ENCODE measurements at regions of chr1 and their contacts with region 1.

Region 1: DNA sequence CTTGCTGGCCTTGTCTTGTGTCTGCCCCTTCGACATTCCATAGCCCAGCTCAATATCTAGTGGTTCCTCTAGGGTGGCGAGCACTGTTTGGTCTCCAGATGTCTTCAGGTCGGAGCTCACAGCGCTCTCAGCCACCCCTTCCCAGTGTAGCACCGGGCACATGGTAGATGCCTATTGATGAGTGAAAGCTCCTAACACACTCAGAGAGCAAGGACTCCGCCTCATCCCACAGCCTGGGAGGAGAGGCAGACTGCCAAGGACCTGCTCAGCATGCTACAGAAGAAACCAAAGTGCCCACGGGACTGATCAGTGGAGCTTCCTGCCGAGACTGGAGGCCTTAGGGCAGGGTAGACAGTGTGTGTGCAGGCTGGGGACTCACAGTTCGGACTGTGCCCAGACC is 10.9 kb downstream of the PCSK9 start:
- DNase-seq: no peak
- H3K4me3 ChIP-seq: no peak overlapping the region
- H3K27ac ChIP-seq: no peak overlapping the region
- H3K4me1 ChIP-seq: no peaks in the 10 kb centered on the region
- H3K27me3 ChIP-seq: no peaks in the 10 kb centered on the region
- CTCF ChIP-seq: no peak
- EP300 ChIP-seq: no peak
- POLR2A ChIP-seq: no peak
- RAD21 ChIP-seq: no peak

Region 2: DNA sequence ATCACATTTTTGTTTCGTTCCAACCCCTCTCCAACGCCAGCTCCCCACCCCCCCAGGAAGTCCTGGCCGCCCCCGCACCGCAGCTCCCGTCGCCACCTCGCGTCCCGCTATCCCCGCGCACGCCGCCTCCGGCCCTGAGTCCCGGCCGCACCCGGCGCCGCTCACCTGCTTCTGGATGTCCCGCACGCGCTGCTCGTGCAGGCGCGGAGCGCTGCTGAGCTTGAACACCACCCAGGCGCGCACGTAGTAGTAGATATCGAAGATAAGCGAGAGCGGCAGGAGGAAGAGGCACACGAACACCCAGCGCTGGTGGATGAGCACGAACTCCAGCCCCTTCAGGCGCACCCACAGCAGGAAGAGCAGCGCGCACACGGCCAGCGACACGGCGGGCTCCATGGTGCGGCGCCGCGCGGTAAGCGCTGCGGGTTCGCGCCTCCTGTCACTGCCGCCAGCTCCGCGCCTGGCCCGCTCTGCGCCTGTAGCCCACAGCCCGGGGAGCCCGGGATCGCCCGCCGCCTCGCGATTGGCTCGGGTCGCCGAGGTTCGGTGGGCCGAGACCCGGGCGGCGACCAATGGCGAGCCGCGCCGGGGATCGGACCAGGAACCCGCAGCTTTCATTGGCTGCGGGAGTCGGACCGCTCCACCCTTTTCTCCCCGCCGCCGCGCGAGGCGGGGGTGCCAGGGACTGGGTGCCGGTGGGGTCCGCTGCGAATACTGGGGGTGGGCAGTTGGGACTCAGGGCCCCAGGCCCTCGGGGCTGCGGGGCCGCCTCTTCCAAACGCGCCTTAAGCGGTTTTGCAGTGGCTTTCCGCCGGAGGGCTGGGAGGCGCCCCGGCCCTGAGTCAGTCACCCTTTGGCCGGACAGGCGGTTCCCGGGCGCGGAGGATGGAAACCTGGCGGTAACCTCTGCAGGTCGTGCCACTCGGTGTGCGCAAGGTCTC is 163.3 kb before region 1 on chr1 and contains the start of gene DHCR24:
- CTCF ChIA-PET with region 1: no interaction called
- POLR2A ChIA-PET with region 1: no interaction called
- DNase-seq: peak; percentile 49 to 90
- H3K4me3 ChIP-seq: peak within 1 kb of the TSS; percentile 77 to 99 (median 84)
- H3K27ac ChIP-seq: peak within 1 kb of the TSS; percentile 47; the same call in 1 of the 2 replicates
- H3K4me1 ChIP-seq: peaks cover 13 to 22% (median 19%) of the 10 kb centered on the region in 4 experiments
- H3K27me3 ChIP-seq: no peaks in the 10 kb centered on the region
- CTCF ChIP-seq: no peak
- EP300 ChIP-seq: no peak
- POLR2A ChIP-seq: peak in 1 of 2 experiments; percentile 65; a peak in 1 of 3 replicates
- RAD21 ChIP-seq: no peak
- total RNA-seq, gene DHCR24: 419 and 455 TPM in 2 replicates

Region 3: GRCh38 chr1:55064071-55064581 is 13.8 kb after region 1 on chr1:
- CTCF ChIA-PET with region 1: interaction called, 12 read pairs
- POLR2A ChIA-PET with region 1: interaction called, 4 read pairs
- DNase-seq: no peak
- H3K4me3 ChIP-seq: no peak overlapping the region
- H3K27ac ChIP-seq: no peak overlapping the region
- H3K4me1 ChIP-seq: no peaks in the 10 kb centered on the region
- H3K27me3 ChIP-seq: no peaks in the 10 kb centered on the region
- CTCF ChIP-seq: peak in 1 of 3 experiments; percentile 52; a peak in 2 of 4 replicates
- EP300 ChIP-seq: no peak
- POLR2A ChIP-seq: no peak
- RAD21 ChIP-seq: no peak

Region 4: DNA sequence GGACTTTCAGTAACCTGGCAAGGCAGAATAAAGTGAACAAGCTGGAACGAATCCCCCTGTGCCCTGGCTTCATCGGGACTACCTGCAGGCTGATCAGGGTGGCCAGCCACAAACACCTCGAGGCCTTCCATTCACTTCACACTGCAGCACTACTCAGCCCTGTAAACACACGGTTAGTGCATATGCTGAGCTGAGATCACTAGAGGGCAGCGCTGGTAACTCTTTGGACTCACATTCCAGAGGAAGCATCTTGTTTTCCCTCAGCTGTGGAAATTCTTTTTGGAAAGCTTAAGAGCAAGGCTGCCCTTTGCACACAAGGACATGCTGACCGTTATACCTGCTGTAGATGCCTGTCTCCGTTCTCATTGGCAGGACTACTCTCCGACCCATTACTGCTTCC is 21.2 kb after region 1 on chr1:
- CTCF ChIA-PET with region 1: interaction called, 11 read pairs
- POLR2A ChIA-PET with region 1: no interaction called
- DNase-seq: peak in 1 of 2 experiments; percentile 36
- H3K4me3 ChIP-seq: no peak overlapping the region
- H3K27ac ChIP-seq: no peak overlapping the region
- H3K4me1 ChIP-seq: no peaks in the 10 kb centered on the region
- H3K27me3 ChIP-seq: no peaks in the 10 kb centered on the region
- CTCF ChIP-seq: peak; percentile 31 to 83 (median 61)
- EP300 ChIP-seq: no peak
- POLR2A ChIP-seq: no peak
- RAD21 ChIP-seq: peak; percentile 48 to 66

Region 5: GRCh38 chr1:55155514-55155913 is 105.2 kb after region 1 on chr1:
- CTCF ChIA-PET with region 1: no interaction called
- POLR2A ChIA-PET with region 1: no interaction called
- DNase-seq: no peak
- H3K4me3 ChIP-seq: no peak overlapping the region
- H3K27ac ChIP-seq: no peak overlapping the region
- H3K4me1 ChIP-seq: no peaks in the 10 kb centered on the region
- H3K27me3 ChIP-seq: no peaks in the 10 kb centered on the region
- CTCF ChIP-seq: no peak
- EP300 ChIP-seq: no peak
- POLR2A ChIP-seq: no peak
- RAD21 ChIP-seq: no peak

Measured in H1 (cell line).